Activated T-helper 2 cell treated with anti-CD3 and anti-CD28 coated beads, Interferon-gamma antibody, Interleukin-2, Interleukin-4, amounts not matched to agents 10 μg/mL and 5 μg/mL and 100 μg/mL, durations not matched to agents 14 hours and 24 hours and 36 hours (primary cell): ENCODE measurements at regions of chr1 and their contacts with region 1.

Region 1: GRCh38 chr1:185317034-185317885 is at the start of gene IVNS1ABP:
- DNase-seq: peak; percentile 93
- H3K4me3 Mint-ChIP-seq: peak within 1 kb of the TSS; percentile 90
- H3K27ac Mint-ChIP-seq: peak within 1 kb of the TSS; percentile 98
- H3K4me1 Mint-ChIP-seq: peaks cover 37% of the 10 kb centered on the region
- H3K27me3 Mint-ChIP-seq: no peaks in the 10 kb centered on the region
- total RNA-seq, gene IVNS1ABP: 143 and 148 TPM in 2 replicates

Region 2: DNA sequence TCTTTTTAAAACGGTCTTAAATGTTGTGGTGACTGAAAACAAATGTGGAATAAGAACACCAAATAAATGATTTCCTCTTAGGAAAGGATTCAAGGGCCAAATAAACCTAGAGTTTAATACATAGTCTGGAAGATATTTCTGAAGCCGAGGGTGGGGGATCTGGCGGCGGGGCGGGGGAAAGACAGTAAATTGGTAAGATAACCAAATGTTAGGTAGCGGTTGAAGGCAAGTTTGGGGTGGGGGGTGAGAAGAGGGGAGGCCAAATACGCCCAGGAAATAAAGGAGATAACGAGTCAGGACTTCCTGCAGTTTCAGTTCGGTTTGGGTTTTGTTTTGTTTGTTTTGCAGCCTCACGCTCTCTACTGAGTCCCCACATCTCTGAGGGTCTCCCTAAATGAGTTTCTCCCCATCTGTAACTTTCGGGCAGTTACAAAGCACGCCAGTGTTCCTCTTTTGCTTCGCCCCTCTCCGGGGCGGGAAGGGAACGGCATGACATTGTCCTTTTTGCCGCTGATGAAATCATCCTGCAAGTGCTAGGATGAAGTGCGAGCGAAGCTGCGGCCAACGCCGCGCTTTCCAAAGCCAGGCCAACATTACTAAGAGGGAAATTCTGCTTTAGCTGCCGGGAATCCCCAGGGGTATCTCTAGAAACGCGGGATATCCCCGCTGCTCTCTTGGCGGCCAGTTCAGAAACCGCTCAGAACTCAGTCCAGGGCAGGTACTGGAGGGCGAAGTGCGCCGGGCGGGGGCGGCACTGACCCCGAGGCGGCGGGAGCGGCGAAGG is 343.8 kb before region 1 on chr1:
- intact Hi-C with region 1: loop called (anchors 5 kb)
- DNase-seq: no peak
- H3K4me3 Mint-ChIP-seq: peak overlapping the region; percentile 90
- H3K27ac Mint-ChIP-seq: peak overlapping the region; percentile 96
- H3K4me1 Mint-ChIP-seq: peaks cover 57% of the 10 kb centered on the region
- H3K27me3 Mint-ChIP-seq: peaks cover 13% of the 10 kb centered on the region

Region 3: DNA sequence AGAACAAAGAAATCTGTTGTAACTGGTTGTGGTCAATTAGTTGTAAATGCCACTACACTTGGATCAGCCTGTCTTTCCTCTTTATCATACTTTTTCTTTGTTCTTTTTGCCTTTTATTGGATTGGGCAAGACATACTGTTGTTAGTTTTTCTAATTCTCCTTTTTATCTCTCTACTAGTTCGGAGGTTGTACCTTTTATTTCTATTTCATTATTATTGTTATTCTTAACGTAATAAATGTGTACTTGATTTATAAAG is 59.4 kb before region 1 on chr1:
- intact Hi-C with region 1: no loop called
- DNase-seq: no peak
- H3K4me3 Mint-ChIP-seq: peak overlapping the region; percentile 47
- H3K27ac Mint-ChIP-seq: peak overlapping the region; percentile 38
- H3K4me1 Mint-ChIP-seq: peaks cover 8% of the 10 kb centered on the region
- H3K27me3 Mint-ChIP-seq: no peaks in the 10 kb centered on the region

Region 4: GRCh38 chr1:185338719-185339622 is 21.7 kb after region 1 on chr1:
- intact Hi-C with region 1: loop called (anchors 1 kb)
- DNase-seq: peak; percentile 47
- H3K4me3 Mint-ChIP-seq: peak overlapping the region; percentile 36
- H3K27ac Mint-ChIP-seq: peak overlapping the region; percentile 63
- H3K4me1 Mint-ChIP-seq: peaks cover 35% of the 10 kb centered on the region
- H3K27me3 Mint-ChIP-seq: no peaks in the 10 kb centered on the region

Region 5: GRCh38 chr1:185559684-185560331 is 242.5 kb after region 1 on chr1:
- intact Hi-C with region 1: loop called (anchors 1 kb)
- DNase-seq: peak; percentile 75
- H3K4me3 Mint-ChIP-seq: peak overlapping the region; percentile 5
- H3K27ac Mint-ChIP-seq: peak overlapping the region; percentile 71
- H3K4me1 Mint-ChIP-seq: peaks cover 51% of the 10 kb centered on the region
- H3K27me3 Mint-ChIP-seq: no peaks in the 10 kb centered on the region

Region 6: DNA sequence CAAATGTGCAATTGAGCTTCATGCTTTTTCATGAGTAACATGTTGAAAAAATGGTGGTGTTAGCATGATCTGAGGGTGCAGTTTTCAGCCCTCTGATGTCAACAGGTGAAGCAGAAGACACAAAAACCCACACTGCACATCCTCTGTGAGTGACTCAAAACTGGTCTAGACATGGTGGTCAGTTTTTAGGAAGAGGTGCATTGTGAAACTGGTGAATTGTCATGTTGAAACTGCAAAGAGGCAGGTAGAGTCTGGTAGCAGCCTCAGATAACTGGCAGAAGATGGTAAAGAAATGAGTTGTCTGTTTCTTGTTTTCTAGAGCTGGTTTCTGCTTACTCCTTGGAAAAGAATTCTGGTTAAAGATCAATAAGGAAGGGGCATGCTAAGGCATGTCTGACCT is 319.6 kb after region 1 on chr1:
- intact Hi-C with region 1: loop called (anchors 1 kb)
- DNase-seq: peak; percentile 56
- H3K4me3 Mint-ChIP-seq: no peak overlapping the region
- H3K27ac Mint-ChIP-seq: peak overlapping the region; percentile 79
- H3K4me1 Mint-ChIP-seq: peaks cover 22% of the 10 kb centered on the region
- H3K27me3 Mint-ChIP-seq: no peaks in the 10 kb centered on the region

Region 7: DNA sequence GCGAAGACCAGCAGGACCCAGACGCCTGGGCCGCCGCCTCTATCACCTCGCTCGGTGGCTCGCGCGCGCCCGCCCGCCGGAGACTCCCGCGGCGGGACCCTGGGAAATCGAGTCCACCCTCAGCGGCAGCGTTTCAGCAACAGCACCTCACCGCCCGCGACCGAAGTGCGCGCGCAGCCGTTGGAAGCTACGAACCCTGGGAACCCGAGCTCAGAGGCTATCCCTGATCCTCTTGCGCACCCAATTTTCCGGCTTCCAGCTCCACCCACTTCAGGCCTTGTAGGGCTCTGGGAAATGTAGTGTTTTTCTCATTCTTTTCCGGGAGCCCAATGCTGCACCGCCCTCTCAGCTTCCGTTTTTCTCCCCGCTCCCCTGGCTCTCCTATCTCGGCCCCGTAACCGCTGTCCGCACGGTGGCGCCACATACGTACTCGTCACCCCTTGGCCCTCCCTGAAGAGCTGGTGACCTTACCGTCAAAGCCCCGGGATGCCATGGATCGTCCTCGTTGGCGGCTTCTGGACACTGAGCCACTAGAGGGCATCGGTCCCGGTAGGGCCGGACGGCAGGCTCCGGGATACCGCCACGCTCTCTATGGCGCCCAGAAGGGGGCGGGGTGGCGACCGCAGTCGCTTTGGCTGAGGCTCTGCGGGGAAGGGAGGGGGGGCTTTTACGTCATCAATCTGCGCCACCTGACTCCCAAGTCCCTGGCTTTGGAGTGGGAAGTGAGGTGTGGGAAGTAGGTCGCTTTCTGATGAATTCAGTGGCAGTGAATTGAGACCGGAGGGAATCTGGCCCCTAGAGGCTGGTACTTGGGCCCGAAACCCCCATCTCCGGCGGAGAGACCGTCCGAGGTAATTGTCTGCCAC is 1058.1 kb after region 1 on chr1 and contains the starts of genes ODR4 and TPR:
- intact Hi-C with region 1: loop called (anchors 1 kb)
- DNase-seq: peak; percentile 97
- H3K4me3 Mint-ChIP-seq: peak within 1 kb of the TSS; percentile 96
- H3K27ac Mint-ChIP-seq: peak within 1 kb of the TSS; percentile 97
- H3K4me1 Mint-ChIP-seq: peaks cover 31% of the 10 kb centered on the region
- H3K27me3 Mint-ChIP-seq: no peaks in the 10 kb centered on the region
- total RNA-seq, gene ODR4: 16.1 and 17.0 TPM in 2 replicates
- total RNA-seq, gene TPR: 154 and 160 TPM in 2 replicates